ENCODE measurements at regions of chr17 and their contacts with region 1.

Region 1: GRCh38 chr17:66673668-66674315 is 161.1 kb upstream of the CACNG5 start:
- DNase-seq: peak in 34 of 42 donors; percentile 20 to 83 (median 58)

Region 2: GRCh38 chr17:66255112-66255511 is 418.7 kb before region 1 on chr17:
- intact Hi-C with region 1: loop called (anchors 5 kb)
- DNase-seq: peak in 23 of 42 donors; percentile 13 to 76 (median 43)

Region 3: GRCh38 chr17:66643815-66644702 is 29.7 kb before region 1 on chr17:
- intact Hi-C with region 1: no loop called
- DNase-seq: peak in 9 of 42 donors; percentile 7 to 51 (median 26)

Region 4: DNA sequence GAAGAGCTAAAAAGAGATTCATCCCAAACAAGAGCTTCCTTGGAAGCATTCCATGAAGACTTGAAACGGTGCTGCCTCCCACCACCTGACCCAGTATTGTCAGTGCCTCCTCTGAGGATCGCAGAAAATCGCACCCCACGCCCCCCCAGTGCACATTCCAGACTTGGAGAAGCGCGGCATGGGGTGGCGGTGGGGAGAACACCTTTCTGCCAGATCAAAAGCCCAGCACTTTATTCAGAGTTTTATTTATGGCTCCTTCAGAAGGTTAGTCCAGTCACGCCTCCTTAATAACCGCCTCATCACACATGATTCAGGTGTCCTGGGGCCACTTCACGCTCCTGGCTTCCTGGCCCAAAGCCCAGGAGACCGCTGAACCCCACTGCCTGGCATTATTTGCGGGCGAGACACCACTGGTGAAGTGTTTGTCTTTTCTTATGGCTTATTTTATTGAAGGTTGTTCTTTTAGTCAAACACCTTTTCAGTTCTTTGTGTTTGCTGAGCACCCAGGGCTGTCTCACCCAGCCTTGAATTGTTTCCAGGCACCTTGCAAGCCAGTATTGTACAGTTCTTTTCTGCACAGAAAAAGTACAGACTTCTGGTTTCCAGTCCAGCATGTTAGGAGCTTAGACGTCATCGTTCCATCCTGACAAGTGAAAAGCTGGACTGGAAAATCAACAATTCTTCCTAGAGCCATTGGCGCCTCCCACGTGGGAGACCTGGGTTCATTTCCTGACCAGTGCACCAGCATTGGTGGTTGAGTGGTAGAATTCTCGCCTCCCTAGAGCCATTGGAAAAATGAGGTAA is 81.5 kb after region 1 on chr17:
- intact Hi-C with region 1: no loop called
- DNase-seq: peak in 41 of 42 donors; percentile 33 to 89 (median 66)

Measured in head of caudate nucleus (tissue), 42 donors.